Psoas muscle (tissue), 8 donors: ENCODE measurements at regions of chr12 and their contacts with region 1.

Region 1: DNA sequence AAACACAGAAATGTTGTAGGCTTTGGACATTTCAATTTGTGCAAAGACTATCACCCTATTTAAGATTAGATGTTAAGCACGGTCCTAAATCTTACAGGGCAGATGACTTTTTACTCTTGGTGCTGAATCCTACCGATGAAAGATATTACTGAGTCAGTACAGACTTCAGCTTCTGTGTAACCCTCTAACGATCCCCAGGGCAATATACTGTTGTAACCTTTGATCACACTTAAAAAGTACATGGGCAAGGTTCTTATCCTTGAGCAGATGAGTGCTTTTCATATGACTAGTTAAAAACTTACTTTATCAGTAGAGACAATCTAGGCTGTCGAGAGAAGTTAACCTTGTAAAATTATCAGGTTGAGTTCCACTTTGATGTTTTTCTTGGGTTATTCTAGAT is 22.5 kb downstream of the PDE3A start:
- DNase-seq: no peak
- ATAC-seq: no peak
- H3K4me3 ChIP-seq: no peak overlapping the region
- H3K27ac ChIP-seq: no peak overlapping the region
- H3K4me1 ChIP-seq: no peaks in the 10 kb centered on the region
- H3K27me3 ChIP-seq: no peaks in the 10 kb centered on the region
- CTCF ChIP-seq: no peak

Region 2: DNA sequence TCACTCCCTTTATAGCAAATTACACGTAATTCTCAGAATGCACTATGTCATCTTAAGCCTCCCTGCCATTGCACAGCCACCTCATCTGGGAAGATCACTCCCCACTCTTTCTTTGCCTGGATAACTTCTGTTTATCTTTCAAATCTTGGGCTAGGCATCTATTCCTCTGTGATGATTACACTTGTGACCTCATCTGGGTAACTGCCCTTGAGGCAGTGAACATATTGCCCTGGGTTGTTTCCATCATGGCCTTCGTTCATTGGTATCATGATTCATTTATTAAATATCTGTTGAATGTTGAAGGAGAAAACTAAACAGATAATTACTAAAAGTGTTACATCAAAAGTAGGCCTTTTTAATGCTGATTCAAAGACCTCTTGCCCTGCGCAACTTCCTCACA is 48.7 kb before region 1 on chr12:
- intact Hi-C with region 1: no loop called
- DNase-seq: no peak
- ATAC-seq: no peak
- H3K4me3 ChIP-seq: no peak overlapping the region
- H3K27ac ChIP-seq: no peak overlapping the region
- H3K4me1 ChIP-seq: no peaks in the 10 kb centered on the region
- H3K27me3 ChIP-seq: no peaks in the 10 kb centered on the region
- CTCF ChIP-seq: no peak

Region 3: DNA sequence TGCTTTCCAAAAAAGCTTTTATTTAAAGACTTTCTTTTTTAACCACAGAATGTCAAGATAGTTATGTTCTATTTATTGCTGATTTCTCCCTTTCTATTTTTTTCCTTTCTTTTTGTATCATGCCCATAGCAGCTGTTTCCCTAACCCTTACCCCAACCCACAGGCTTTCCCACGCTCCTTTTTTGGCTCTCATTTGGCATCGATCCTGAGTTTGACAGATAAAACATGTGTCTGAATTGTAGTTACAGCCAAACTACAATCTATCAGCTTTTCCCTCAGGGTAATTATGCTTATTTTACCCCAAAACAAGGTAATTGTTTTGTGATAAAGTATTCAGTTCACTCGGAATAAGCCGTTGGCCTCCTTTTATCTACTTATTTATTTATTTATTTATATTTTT is 24.2 kb after region 1 on chr12:
- intact Hi-C with region 1: loop called in 1 of 2 experiments (anchors 2 kb)
- DNase-seq: no peak
- ATAC-seq: peak in 1 of 4 donors; percentile 47
- H3K4me3 ChIP-seq: peak overlapping the region; percentile 13
- H3K27ac ChIP-seq: no peak overlapping the region
- H3K4me1 ChIP-seq: no peaks in the 10 kb centered on the region
- H3K27me3 ChIP-seq: no peaks in the 10 kb centered on the region
- CTCF ChIP-seq: no peak

Region 4: DNA sequence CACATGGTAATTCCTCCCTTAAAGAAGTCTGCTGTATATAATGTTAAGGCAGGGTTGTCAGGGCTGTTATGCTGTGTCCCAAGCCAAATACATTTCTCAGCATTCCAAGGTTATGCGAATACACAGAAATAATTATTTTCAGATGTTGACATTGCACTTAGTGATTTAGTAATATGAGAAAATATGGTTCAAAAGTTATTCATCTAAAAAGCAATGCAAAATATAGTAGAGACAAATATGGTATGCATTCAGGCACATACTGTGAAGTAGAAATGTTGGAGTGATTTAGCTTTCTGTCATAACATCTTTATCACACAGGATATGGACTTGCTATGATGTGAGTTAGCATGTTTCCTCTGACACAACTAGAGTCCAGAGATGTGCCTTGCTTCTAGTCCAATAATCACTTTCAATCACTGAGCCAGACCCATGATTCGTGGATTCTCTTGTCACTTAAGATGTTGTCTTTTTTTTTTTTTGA is 47.5 kb after region 1 on chr12:
- intact Hi-C with region 1: no loop called
- DNase-seq: no peak
- ATAC-seq: no peak
- H3K4me3 ChIP-seq: no peak overlapping the region
- H3K27ac ChIP-seq: no peak overlapping the region
- H3K4me1 ChIP-seq: no peaks in the 10 kb centered on the region
- H3K27me3 ChIP-seq: no peaks in the 10 kb centered on the region
- CTCF ChIP-seq: no peak